GM10248 (cell line): ENCODE measurements at regions of chr16 and their contacts with region 1.

Region 1: DNA sequence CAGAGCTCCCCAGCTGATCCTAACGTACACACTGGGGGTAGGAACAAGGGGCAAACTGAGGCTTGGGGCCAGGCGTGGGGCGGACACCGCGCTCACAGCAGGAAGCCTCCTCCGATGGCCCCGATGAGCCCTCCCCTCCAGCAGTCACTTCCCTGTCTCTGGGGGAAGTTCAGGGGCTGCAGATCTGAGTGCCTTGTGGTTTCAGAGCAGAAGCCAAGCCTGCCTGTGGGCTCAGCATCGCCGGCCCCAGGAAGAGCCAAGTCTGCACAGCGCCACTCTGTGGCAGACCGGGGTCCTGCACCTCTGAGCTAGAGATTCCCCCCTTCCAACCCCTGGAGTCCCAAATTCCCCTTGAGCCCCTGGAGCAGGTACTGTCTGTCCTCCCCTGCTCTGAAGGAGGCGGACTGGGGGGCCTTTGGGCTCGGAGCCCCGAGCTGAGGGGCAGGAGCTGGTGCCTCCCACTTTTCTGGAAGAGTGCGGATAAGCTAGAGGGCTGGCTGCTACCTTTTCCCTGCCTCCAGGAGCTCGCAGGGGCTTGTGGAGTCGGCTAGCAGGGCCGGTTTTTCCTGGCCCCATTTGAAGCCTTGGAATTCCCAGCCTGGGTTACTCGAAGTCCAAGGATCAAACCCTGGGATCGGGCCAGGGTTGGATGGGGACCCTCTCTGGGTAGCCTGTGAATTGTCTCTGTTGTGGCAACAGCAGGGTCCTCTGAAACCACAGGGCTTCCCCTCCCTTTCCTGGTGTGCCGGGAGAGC is 2.9 kb downstream of the GSE1 start:
- DNase-seq: peak; percentile 91
- CTCF ChIP-seq: peak; percentile 93

Region 2: DNA sequence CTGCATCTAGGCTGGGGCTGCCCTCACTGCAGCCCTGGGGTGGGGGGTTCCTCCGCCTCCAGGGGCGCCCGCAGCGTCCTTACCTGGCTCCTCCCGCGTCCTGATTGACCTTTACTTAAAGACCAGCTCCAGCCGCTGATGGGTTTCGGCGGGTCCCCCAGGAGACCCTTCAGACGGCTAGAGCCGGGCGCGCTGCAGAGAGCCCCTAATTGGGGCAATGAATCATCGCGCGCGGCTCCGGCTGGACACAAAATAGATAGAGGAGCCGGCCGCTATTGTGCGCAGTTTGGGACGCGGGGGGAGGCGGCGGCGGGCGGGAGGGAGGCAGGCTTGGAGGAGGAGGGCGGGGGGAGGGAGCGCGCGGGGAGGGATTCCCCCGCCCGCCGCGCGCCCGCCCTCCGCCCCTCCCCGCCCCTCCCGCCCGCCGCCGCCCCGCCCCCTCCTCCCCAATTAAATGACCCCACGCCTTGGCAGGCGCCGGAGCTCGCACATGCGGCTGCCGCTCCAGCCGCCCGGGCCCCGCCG is 447.2 kb before region 1 on chr16:
- CTCF ChIA-PET with region 1: no interaction called
- POLR2A ChIA-PET with region 1: no interaction called
- DNase-seq: peak; percentile 74
- CTCF ChIP-seq: no peak

Region 3: GRCh38 chr16:85195900-85196772 is 419.9 kb before region 1 on chr16:
- CTCF ChIA-PET with region 1: no interaction called
- POLR2A ChIA-PET with region 1: no interaction called
- DNase-seq: no peak
- CTCF ChIP-seq: no peak

Region 4: DNA sequence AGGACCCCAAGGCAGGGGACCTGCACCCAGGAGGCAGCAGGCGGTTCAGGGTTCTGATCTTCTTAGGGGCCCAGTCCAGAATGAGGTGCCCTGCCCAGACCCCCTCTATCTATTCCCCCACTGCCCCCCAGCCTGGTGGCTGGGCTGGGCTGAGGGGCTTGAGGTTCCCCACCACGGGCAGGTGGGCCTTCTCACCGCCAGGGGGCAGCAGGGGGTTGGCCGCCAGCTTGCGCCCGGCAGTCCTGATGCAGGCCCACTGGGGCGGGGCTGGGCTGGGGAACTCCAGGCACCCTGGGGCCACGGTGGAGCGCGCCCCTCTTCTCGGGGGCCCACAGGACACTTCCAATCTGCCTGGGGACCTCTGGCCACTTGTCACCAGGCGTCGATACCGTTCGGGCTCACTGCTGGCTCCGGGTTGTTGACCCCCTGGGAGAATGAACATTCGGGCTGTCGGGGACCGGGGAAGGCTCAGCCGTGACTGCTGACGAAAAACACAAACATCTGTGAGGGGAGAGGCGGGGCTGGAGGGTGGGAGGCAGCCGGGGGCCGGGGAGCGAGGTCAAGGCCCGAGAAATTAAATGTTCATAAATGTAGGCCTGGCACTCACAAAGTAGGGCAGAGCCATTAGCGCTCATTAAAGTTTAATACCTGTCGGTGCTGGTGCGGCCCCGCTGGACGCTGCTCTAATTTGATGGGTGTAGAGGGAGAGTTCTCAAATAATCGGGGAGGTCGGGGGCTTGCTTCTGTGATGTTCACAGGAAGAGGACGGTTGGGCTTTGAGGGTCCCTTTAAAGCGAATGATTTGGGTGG is 222.2 kb before region 1 on chr16:
- CTCF ChIA-PET with region 1: interaction called, 15 read pairs
- POLR2A ChIA-PET with region 1: no interaction called
- DNase-seq: peak; percentile 88
- CTCF ChIP-seq: peak; percentile 81

Region 5: GRCh38 chr16:85448557-85449197 is 167.4 kb before region 1 on chr16:
- CTCF ChIA-PET with region 1: interaction called, 40 read pairs
- POLR2A ChIA-PET with region 1: no interaction called
- DNase-seq: no peak
- CTCF ChIP-seq: no peak

Region 6: GRCh38 chr16:85554112-85554813 is 61.8 kb before region 1 on chr16:
- CTCF ChIA-PET with region 1: interaction called, 20 read pairs
- POLR2A ChIA-PET with region 1: interaction called, 5 read pairs
- DNase-seq: peak; percentile 89
- CTCF ChIP-seq: no peak

Region 7: GRCh38 chr16:85626191-85626981 is 10.4 kb after region 1 on chr16:
- CTCF ChIA-PET with region 1: interaction called, 67 read pairs
- POLR2A ChIA-PET with region 1: no interaction called
- DNase-seq: no peak
- CTCF ChIP-seq: no peak

Region 8: DNA sequence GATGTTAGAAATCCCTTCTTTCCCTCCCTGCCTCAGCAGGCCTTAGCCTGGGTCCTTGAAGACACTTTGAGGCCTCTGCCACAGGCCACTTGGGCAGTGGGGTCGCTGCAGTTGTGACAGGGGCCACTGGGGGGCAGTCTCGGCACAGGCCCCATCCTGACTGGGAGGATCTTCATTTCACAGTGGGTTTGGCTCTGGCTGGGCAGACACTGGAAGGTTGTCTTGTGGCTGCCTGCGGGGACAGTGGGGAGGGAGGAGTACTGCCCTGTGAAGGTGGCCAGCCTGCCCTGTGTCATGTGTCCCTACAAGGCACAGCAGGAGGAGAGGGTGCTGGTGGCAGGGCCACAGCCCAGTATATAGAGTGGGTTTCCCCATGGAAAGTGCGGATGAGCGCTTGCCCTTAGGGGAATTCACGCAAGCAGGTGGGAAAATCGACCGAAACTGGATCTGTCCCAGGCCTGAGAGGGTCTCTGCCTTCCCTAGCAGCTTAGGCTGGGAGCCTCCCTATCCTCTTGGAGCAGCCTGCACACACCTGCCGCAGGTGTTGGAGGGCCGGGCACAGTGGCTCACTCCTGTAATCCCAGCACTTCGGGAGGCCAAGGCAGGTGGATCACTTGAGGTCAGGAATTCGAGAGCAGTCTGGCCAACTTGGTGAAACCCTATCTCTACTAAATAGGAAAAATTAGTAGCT is 43.9 kb after region 1 on chr16:
- CTCF ChIA-PET with region 1: interaction called, 21 read pairs
- POLR2A ChIA-PET with region 1: no interaction called
- DNase-seq: peak; percentile 86
- CTCF ChIP-seq: peak; percentile 94